ENCODE measurements at regions of chr12 and their contacts with region 1.

Region 1: GRCh38 chr12:94101738-94102660 is 46.4 kb upstream of the PLXNC1 start:
- DNase-seq: peak; percentile 65 to 75
- ATAC-seq: peak; percentile 69 to 90
- H3K4me3 ChIP-seq: peak overlapping the region; percentile 58 to 78 (median 70)
- H3K27ac ChIP-seq: peak overlapping the region in 1 of 4 donors; percentile 32
- H3K4me1 ChIP-seq: peaks cover 15 to 20% of the 10 kb centered on the region in 2 donors
- H3K27me3 ChIP-seq: peaks cover 0 to 4% (median 0%) of the 10 kb centered on the region in 3 donors
- CTCF ChIP-seq: peak; percentile 72 to 86 (median 83)
- POLR2A ChIP-seq: no peak

Region 2: DNA sequence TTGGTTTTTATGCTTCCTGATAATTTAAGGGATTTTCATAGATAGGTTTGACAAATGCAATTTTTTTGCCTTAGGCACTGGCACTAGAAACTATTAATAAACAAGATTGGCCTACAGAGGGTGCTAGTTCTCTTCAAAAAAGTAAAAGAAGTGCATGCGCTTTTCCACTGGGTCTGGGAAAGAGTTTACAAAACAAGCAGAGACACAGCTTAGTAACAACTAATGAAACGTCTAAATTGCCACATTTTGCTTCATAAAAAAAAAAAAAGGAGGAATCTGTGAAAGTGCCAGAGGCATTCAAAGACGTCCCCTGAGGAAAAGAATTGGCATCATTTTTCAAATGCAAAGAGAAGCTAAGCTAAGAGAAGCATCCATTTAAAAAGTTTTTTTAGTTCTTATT is 1114.6 kb before region 1 on chr12:
- in situ Hi-C with region 1: loop called in 3 of 4 experiments (anchors 25 kb)
- intact Hi-C with region 1: no loop called
- DNase-seq: peak in 1 of 2 donors; percentile 6
- ATAC-seq: peak; percentile 87 to 90
- H3K4me3 ChIP-seq: peak overlapping the region in 2 of 4 donors; percentile 4 to 14
- H3K27ac ChIP-seq: peak overlapping the region; percentile 59 to 78 (median 66)
- H3K4me1 ChIP-seq: peaks cover 8 to 11% of the 10 kb centered on the region in 2 donors
- H3K27me3 ChIP-seq: no peaks in the 10 kb centered on the region
- CTCF ChIP-seq: peak; percentile 49 to 60 (median 52)
- POLR2A ChIP-seq: no peak

Region 3: GRCh38 chr12:93563807-93564538 is 538.0 kb before region 1 on chr12:
- in situ Hi-C with region 1: loop called (anchors 5 kb)
- intact Hi-C with region 1: loop called (anchors 1 kb)
- DNase-seq: no peak
- ATAC-seq: no peak
- H3K4me3 ChIP-seq: no peak overlapping the region
- H3K27ac ChIP-seq: no peak overlapping the region
- H3K4me1 ChIP-seq: no peaks in the 10 kb centered on the region
- H3K27me3 ChIP-seq: no peaks in the 10 kb centered on the region
- CTCF ChIP-seq: no peak
- POLR2A ChIP-seq: no peak

Region 4: GRCh38 chr12:93677195-93678064 is 424.6 kb before region 1 on chr12 and contains the start of gene CRADD:
- in situ Hi-C with region 1: no loop called
- intact Hi-C with region 1: loop called (anchors 2 kb)
- DNase-seq: peak; percentile 78 to 84
- ATAC-seq: peak; percentile 92 to 96
- H3K4me3 ChIP-seq: peak within 1 kb of the TSS; percentile 71 to 87 (median 84)
- H3K27ac ChIP-seq: peak within 1 kb of the TSS; percentile 95 to 96 (median 96)
- H3K4me1 ChIP-seq: peaks cover 44 to 47% of the 10 kb centered on the region in 2 donors
- H3K27me3 ChIP-seq: no peaks in the 10 kb centered on the region
- CTCF ChIP-seq: no peak
- POLR2A ChIP-seq: peak; percentile 53 to 70
- total RNA-seq, gene CRADD: 19.4 to 28.7 (median 22.6) TPM

Region 5: DNA sequence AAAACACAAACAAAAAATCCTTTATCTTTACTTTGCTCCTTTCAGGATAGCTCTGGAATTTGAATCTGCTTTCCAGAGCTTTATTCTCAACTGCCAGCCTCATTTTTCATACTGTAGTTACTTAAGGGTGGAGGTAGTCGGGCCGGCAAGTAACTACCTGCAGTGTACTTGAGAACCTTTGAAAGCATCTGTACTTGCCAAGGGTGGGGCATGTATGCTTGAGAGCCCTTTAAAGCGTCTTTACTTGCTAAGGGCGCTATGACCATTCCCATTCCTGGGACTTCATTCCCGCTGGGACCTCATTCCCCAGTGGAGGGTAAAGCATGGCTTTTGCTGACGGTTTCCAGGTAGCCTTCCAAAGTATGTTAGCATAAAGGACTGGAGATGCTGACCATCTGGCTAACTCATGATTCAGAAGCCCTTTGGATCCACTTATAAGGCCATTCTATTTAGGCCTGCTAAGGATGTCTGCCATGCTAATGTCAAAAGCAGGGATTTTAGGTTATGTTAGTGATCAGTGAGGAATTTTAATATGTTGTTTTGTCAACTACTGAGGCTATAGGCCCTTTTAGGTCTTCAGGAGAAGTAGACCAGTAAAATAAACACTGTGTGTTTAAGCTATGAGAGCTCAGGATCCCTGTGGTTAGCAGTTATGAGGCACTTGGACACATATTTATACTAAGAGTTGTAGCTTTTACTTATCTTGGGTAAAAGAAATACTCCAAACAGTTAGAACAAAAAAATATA is 350.0 kb before region 1 on chr12:
- in situ Hi-C with region 1: loop called (anchors 10 to 25 kb)
- intact Hi-C with region 1: no loop called
- DNase-seq: no peak
- ATAC-seq: no peak
- H3K4me3 ChIP-seq: no peak overlapping the region
- H3K27ac ChIP-seq: no peak overlapping the region
- H3K4me1 ChIP-seq: peaks cover 7 to 21% of the 10 kb centered on the region in 2 donors
- H3K27me3 ChIP-seq: no peaks in the 10 kb centered on the region
- CTCF ChIP-seq: no peak
- POLR2A ChIP-seq: no peak

Region 6: GRCh38 chr12:93990832-93991803 is 110.9 kb before region 1 on chr12:
- in situ Hi-C with region 1: loop called in 1 of 4 experiments (anchors 10 kb)
- intact Hi-C with region 1: loop called (anchors 1 kb)
- DNase-seq: peak; percentile 56 to 62
- ATAC-seq: peak; percentile 96 to 98
- H3K4me3 ChIP-seq: peak overlapping the region in 3 of 4 donors; percentile 5 to 42 (median 20)
- H3K27ac ChIP-seq: peak overlapping the region in 2 of 4 donors; percentile 15 to 62
- H3K4me1 ChIP-seq: peaks cover 6 to 9% of the 10 kb centered on the region in 2 donors
- H3K27me3 ChIP-seq: no peaks in the 10 kb centered on the region
- CTCF ChIP-seq: peak; percentile 29 to 69 (median 35)
- POLR2A ChIP-seq: no peak

Measured in gastrocnemius medialis (tissue), 4 donors.